ENCODE measurements at regions of chr17 and their contacts with region 1.

Region 1: GRCh38 chr17:1186923-1187771 is 7.4 kb upstream of the ABR start:
- DNase-seq: peak; percentile 84
- H3K4me3 ChIP-seq: no peak overlapping the region
- H3K27ac ChIP-seq: no peak overlapping the region
- H3K4me1 ChIP-seq: peaks cover 3% of the 10 kb centered on the region
- H3K27me3 ChIP-seq: peaks cover 6 to 9% of the 10 kb centered on the region in 2 experiments
- CTCF ChIP-seq: peak; percentile 99 to 100
- POLR2A ChIP-seq: no peak

Region 2: GRCh38 chr17:1147661-1148060 is 39.5 kb before region 1 on chr17:
- CTCF ChIA-PET with region 1: interaction called, 36 read pairs
- POLR2A ChIA-PET with region 1: no interaction called
- dilution Hi-C with region 1: no loop called
- intact Hi-C with region 1: loop called (anchors 1 kb)
- DNase-seq: peak; percentile 80
- H3K4me3 ChIP-seq: no peak overlapping the region
- H3K27ac ChIP-seq: no peak overlapping the region
- H3K4me1 ChIP-seq: no peaks in the 10 kb centered on the region
- H3K27me3 ChIP-seq: no peaks in the 10 kb centered on the region
- CTCF ChIP-seq: peak; percentile 48 to 72
- POLR2A ChIP-seq: no peak

Region 3: GRCh38 chr17:1164935-1165556 is 22.1 kb before region 1 on chr17:
- CTCF ChIA-PET with region 1: interaction called, 47 read pairs
- POLR2A ChIA-PET with region 1: no interaction called
- dilution Hi-C with region 1: no loop called
- intact Hi-C with region 1: loop called (anchors 1 kb)
- DNase-seq: peak; percentile 29
- H3K4me3 ChIP-seq: no peak overlapping the region
- H3K27ac ChIP-seq: no peak overlapping the region
- H3K4me1 ChIP-seq: peaks cover 14% of the 10 kb centered on the region
- H3K27me3 ChIP-seq: no peaks in the 10 kb centered on the region
- CTCF ChIP-seq: peak; percentile 11 to 25
- POLR2A ChIP-seq: no peak

Region 4: GRCh38 chr17:1173432-1174262 is 13.5 kb before region 1 on chr17:
- CTCF ChIA-PET with region 1: interaction called, 26 read pairs
- POLR2A ChIA-PET with region 1: no interaction called
- dilution Hi-C with region 1: no loop called
- intact Hi-C with region 1: no loop called
- DNase-seq: no peak
- H3K4me3 ChIP-seq: no peak overlapping the region
- H3K27ac ChIP-seq: no peak overlapping the region
- H3K4me1 ChIP-seq: peaks cover 7% of the 10 kb centered on the region
- H3K27me3 ChIP-seq: no peaks in the 10 kb centered on the region
- CTCF ChIP-seq: no peak
- POLR2A ChIP-seq: no peak

Region 5: DNA sequence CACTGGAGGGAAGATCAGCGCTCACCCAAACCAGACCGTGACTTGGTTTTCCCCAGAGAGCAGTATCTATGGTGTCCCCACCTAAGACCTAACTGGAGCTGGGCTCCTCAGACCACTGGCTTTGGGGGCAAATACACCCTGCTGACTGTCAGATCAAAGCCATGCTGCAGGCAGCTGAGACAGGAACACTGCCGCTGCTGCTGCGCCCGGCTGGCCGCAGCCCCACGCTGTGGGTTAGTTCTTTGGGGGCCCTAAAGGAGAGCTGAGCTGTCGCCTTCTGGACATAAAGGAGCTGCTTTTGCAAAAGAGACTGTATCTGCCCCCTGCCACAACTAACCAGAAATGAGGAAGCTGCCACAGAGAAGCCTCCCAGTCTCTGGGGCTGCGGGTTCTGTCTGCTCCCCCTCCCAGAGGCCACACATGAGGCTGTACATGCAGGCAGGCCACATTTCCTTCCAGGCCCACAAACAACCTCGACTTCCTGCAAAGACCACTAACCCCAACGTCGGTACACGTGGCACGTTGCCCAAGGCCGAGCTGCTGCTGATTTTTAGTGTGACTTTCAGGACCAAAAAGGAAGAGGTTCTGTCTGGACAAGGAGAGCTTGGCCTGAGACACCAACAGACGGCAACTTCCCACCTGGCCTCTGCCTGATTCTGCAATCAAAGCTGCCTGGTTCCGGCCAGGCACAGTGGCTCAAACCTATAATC is 10.8 kb after region 1 on chr17:
- CTCF ChIA-PET with region 1: interaction called, 40 read pairs
- POLR2A ChIA-PET with region 1: no interaction called
- dilution Hi-C with region 1: no loop called
- intact Hi-C with region 1: no loop called
- DNase-seq: no peak
- H3K4me3 ChIP-seq: no peak overlapping the region
- H3K27ac ChIP-seq: no peak overlapping the region
- H3K4me1 ChIP-seq: no peaks in the 10 kb centered on the region
- H3K27me3 ChIP-seq: no peaks in the 10 kb centered on the region
- CTCF ChIP-seq: no peak
- POLR2A ChIP-seq: no peak

Region 6: DNA sequence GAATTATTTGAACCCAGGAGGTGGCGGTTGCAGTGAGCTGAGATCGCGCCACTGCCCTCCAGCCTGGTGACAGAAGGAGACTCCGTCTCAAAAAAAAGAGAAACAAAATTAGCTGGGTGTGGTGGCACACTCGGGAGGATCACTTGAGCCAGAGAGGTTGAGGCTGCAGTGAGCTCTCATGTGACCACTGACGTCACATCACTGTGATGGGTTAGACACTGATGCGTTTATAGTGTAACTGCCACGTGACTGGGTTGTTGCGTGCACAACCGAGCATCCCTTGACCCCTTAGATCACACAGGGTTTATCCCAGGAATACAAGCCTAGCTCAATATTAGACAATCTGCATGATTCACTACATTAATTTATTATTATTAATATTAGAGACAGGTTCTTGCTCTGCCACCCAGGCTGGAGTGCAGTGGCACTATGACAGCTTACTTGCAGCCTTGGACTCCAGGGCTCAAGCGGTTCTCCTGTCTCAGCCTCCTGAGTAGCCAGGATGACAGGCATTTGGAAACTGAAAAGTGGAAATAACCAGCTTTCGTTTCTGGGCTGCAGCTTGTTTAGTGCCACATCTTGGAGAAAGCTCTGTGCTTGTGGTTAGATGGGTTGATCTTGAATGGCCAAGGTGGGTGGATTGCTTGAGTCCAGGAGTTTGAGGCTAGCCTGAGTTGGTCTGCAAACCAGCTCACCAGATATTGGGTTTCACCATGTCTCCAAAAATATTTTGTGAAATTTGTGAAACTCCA is 19.1 kb after region 1 on chr17:
- CTCF ChIA-PET with region 1: interaction called, 40 read pairs
- POLR2A ChIA-PET with region 1: no interaction called
- dilution Hi-C with region 1: no loop called
- intact Hi-C with region 1: no loop called
- DNase-seq: no peak
- H3K4me3 ChIP-seq: no peak overlapping the region
- H3K27ac ChIP-seq: no peak overlapping the region
- H3K4me1 ChIP-seq: peaks cover 4% of the 10 kb centered on the region
- H3K27me3 ChIP-seq: peaks cover 6 to 11% of the 10 kb centered on the region in 2 experiments
- CTCF ChIP-seq: no peak
- POLR2A ChIP-seq: no peak

Region 7: DNA sequence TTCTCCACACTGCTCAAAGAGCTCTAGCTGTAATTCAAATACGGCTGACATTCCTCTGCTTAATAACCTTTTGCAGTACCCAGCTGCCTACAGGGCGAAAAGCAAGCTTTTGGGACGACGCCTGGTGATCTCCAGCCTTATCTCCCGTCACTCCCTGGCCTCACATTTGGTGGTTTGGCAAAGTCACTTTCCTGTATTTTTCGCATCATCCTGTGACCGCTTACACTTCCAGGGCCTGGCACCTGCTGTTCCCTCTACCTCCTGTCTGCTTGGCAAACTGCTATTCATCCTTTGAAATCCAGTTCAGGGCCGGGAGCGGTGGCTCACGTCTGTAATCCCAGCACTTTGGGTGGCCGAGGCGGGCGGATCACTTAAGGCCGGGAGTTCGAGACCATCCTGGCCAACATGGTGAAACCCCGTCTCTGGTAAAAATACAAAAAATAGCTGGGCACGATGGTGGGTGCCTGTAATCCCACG is 80.4 kb after region 1 on chr17:
- CTCF ChIA-PET with region 1: no interaction called
- POLR2A ChIA-PET with region 1: no interaction called
- dilution Hi-C with region 1: no loop called
- intact Hi-C with region 1: no loop called
- DNase-seq: no peak
- H3K4me3 ChIP-seq: no peak overlapping the region
- H3K27ac ChIP-seq: no peak overlapping the region
- H3K4me1 ChIP-seq: peaks cover 6% of the 10 kb centered on the region
- H3K27me3 ChIP-seq: peaks cover 11 to 16% of the 10 kb centered on the region in 2 experiments
- CTCF ChIP-seq: no peak
- POLR2A ChIP-seq: no peak